Activated B cell treated with CpG ODN at 0.5 μM for 24 hours (primary cell): ENCODE measurements at regions of chr12 and their contacts with region 1.

Region 1: GRCh38 chr12:51270067-51270970 is at the start of gene SMAGP:
- DNase-seq: peak; percentile 69
- ATAC-seq: peak; percentile 73
- H3K4me3 Mint-ChIP-seq: peak within 1 kb of the TSS; percentile 89
- H3K27ac Mint-ChIP-seq: peak within 1 kb of the TSS; percentile 80
- H3K4me1 Mint-ChIP-seq: peaks cover 26% of the 10 kb centered on the region
- H3K27me3 Mint-ChIP-seq: no peaks in the 10 kb centered on the region
- CTCF ChIP-seq: no peak
- total RNA-seq, gene SMAGP: 11.4 and 11.5 TPM in 2 replicates

Region 2: DNA sequence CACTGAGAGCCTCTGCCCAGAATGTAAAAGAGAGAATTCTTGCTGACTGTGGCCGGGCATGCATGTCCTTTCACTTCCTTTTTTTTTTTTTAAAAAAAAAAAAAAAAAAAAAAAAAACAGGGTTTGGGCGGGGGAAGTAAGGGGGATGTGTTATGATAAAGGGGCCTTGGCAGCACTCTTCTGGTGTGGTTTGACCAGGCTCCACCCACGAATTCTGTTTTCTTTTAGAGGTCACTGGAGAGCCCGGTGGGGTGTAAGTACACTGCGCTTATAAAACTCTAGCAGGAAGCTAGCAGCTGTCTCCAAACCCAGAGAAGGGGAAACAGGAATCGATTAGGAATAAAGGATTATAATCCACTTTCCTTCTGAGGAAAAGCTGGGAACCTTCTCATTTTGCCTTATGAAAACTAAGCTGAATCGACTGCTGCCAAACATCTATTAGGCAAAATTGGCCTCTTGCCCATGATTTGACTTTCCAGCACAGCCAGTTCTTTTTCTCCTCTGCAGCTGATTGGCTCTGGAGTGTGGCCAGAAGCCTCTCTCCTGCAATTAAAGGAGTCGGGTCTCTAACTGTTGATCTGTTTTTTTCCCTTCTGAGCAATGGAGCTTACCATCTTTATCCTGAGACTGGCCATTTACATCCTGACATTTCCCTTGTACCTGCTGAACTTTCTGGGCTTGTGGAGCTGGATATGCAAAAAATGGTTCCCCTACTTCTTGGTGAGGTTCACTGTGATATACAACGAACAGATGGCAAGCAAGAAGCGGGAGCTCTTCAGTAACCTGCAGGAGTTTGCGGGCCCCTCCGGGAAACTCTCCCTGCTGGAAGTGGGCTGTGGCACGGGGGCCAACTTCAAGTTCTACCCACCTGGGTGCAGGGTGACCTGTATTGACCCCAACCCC is 345.6 kb before region 1 on chr12:
- CTCF ChIA-PET with region 1: no interaction called
- POLR2A ChIA-PET with region 1: no interaction called
- intact Hi-C with region 1: no loop called
- DNase-seq: peak; percentile 49
- ATAC-seq: peak; percentile 88
- H3K4me3 Mint-ChIP-seq: peak overlapping the region; percentile 97
- H3K27ac Mint-ChIP-seq: peak overlapping the region; percentile 98
- H3K4me1 Mint-ChIP-seq: peaks cover 75% of the 10 kb centered on the region
- H3K27me3 Mint-ChIP-seq: no peaks in the 10 kb centered on the region
- CTCF ChIP-seq: no peak

Region 3: DNA sequence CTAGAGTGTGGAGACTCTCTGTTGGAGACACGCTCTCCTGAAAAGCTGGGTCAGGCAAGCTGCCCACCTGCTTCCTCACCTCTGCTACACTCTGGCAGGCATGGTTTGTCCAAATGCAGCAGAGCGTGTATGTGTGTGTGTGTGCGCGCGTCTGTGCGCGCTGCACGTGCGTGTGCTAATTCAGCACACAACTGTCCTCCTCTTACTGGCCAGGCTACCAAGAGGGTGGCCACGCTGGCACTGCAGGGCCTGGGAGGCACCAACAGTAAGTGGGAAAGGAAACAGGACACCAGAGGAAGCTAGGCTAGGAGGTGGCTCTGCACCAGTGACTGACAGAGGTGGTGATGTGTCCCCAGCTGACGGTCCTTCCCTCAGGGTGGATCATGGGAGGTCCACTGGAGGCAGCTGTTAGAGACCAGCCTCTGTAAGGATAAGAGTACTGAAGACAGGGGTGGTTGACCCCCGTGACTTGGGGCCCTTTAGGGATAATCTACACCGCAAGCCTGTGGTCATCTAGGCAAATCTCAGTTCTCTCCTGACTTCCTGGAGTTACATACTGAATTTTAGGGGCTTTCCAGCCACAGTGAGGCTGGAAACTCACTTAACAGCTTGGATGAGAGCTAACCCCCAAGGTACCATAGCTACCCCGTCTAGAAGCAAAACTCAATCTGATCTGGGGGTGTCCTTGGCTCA is 81.8 kb before region 1 on chr12:
- CTCF ChIA-PET with region 1: no interaction called
- POLR2A ChIA-PET with region 1: no interaction called
- intact Hi-C with region 1: no loop called
- DNase-seq: no peak
- ATAC-seq: peak; percentile 60
- H3K4me3 Mint-ChIP-seq: peak overlapping the region; percentile 73
- H3K27ac Mint-ChIP-seq: no peak overlapping the region
- H3K4me1 Mint-ChIP-seq: peaks cover 29% of the 10 kb centered on the region
- H3K27me3 Mint-ChIP-seq: no peaks in the 10 kb centered on the region
- CTCF ChIP-seq: no peak

Region 4: DNA sequence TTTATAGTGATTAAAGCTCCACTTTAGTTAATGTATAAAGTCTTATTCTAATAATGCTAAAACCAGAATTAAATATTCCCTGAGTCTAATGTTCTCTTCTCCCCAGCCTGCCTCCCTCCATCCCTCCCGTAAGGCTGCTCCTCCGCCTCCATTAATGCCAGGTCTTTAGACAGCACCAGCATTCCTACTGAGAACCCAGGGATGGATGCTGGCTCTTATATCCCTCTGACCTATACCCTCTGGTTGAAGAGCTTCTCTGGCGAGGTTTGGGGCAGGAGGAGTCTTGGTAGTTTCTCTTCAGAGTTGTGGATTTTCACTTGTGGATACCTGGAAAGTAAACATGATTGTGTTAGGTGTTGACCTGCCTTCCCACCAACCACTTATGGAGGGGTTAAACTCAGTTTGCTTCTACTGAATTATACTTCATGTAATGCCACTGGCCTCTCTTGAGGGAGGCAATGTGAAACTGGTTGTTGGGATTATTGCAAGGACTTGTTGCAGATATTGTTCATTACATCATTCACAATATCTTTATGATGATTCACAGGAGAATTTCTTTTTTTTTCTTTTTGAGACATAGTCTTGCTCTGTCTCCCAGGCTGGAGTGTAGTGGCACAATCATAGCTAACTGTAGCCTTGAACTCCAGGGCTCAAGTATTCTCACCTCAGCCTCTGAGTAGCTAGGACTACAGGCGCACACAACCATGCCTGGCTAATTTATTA is 11.0 kb after region 1 on chr12:
- CTCF ChIA-PET with region 1: interaction called, 5 read pairs
- POLR2A ChIA-PET with region 1: no interaction called
- intact Hi-C with region 1: loop called (anchors 1 kb)
- DNase-seq: no peak
- ATAC-seq: no peak
- H3K4me3 Mint-ChIP-seq: no peak overlapping the region
- H3K27ac Mint-ChIP-seq: no peak overlapping the region
- H3K4me1 Mint-ChIP-seq: peaks cover 9% of the 10 kb centered on the region
- H3K27me3 Mint-ChIP-seq: no peaks in the 10 kb centered on the region
- CTCF ChIP-seq: no peak

Region 5: DNA sequence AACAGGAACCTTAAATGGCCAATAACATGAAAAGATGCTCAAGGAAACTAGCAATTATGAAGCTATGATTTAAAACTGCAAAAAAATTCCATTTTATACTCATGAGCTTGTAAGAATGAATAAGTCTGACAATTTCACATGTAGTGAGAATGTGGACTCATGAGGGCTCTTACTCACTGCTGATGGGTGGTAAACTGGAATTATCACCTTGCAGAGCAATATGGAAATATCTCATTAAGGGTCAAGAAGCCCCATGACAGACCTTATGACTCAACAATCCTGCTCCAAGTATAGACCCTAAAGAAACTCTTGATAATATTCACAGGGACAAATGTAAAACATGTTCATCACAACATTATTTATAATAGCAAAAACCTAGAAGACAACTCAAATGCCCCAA is 23.4 kb after region 1 on chr12:
- CTCF ChIA-PET with region 1: interaction called, 4 read pairs
- POLR2A ChIA-PET with region 1: interaction called, 7 read pairs
- intact Hi-C with region 1: loop called (anchors 2 kb)
- DNase-seq: no peak
- ATAC-seq: no peak
- H3K4me3 Mint-ChIP-seq: no peak overlapping the region
- H3K27ac Mint-ChIP-seq: peak overlapping the region; percentile 50
- H3K4me1 Mint-ChIP-seq: peaks cover 20% of the 10 kb centered on the region
- H3K27me3 Mint-ChIP-seq: no peaks in the 10 kb centered on the region
- CTCF ChIP-seq: no peak

Region 6: GRCh38 chr12:51326762-51327439 is 56.6 kb after region 1 on chr12:
- CTCF ChIA-PET with region 1: interaction called, 3 read pairs
- POLR2A ChIA-PET with region 1: interaction called, 15 read pairs
- intact Hi-C with region 1: no loop called
- DNase-seq: no peak
- ATAC-seq: peak; percentile 41
- H3K4me3 Mint-ChIP-seq: peak overlapping the region; percentile 62
- H3K27ac Mint-ChIP-seq: peak overlapping the region; percentile 72
- H3K4me1 Mint-ChIP-seq: peaks cover 81% of the 10 kb centered on the region
- H3K27me3 Mint-ChIP-seq: no peaks in the 10 kb centered on the region
- CTCF ChIP-seq: no peak

Region 7: DNA sequence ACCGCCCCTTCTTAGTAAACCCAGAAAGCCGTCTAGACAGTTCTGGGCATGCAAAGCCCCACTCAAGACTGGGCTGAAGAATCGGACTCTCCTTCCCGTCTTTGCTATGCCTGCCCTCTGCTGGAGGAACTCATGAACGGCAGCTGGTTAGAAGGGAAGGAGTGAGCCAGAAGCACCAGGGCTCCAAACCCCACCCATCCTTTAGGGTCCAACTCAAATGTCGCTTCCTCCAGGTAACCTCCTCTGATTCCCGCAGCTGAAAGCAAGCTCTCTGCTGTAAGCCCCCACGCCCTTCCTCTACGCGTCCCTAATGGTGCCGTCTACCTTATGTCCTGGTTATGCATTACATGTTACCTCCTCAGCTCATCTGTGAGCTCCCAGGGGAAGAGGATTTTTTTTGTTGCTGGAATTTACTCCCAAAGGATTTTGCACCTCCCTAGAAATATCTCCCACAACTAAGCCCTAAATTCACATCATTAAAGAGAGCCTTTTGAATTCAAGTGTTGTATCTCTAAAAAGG is 261.7 kb after region 1 on chr12:
- CTCF ChIA-PET with region 1: interaction called, 3 read pairs
- POLR2A ChIA-PET with region 1: interaction called, 4 read pairs
- intact Hi-C with region 1: loop called (anchors 1 kb)
- DNase-seq: peak; percentile 56
- ATAC-seq: peak; percentile 97
- H3K4me3 Mint-ChIP-seq: no peak overlapping the region
- H3K27ac Mint-ChIP-seq: no peak overlapping the region
- H3K4me1 Mint-ChIP-seq: peaks cover 11% of the 10 kb centered on the region
- H3K27me3 Mint-ChIP-seq: peaks cover 28% of the 10 kb centered on the region
- CTCF ChIP-seq: peak; percentile 51